Endothelial cell of umbilical vein (primary cell): ENCODE measurements at regions of chr1 and their contacts with region 1.

Region 1: DNA sequence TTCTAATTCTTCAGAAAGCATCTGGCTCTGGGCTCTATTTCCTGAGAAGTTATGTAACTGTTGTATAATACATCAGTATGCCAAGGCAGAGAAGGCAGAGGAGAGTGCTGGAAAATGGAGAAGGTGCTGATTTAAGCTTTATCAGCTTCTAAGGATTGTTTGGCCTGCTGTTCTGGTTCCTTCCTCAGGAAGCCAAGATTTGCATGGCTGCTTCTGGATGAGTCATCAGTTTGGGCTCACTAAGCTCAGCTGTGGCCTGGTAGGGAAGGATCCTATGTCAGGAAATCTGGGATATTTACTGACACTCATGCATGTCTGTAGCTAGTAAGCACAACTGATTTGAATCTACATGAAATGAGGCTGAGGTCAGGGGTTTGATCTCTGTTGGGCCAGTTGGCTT is 73.2 kb upstream of the ADGRL4 start:
- DNase-seq: peak; percentile 98
- H3K4me3 ChIP-seq: no peak overlapping the region
- H3K27ac ChIP-seq: peak overlapping the region; percentile 81
- H3K4me1 ChIP-seq: peaks cover 37% of the 10 kb centered on the region
- H3K27me3 ChIP-seq: no peaks in the 10 kb centered on the region
- CTCF ChIP-seq: no peak
- POLR2A ChIP-seq: peak; percentile 79

Region 2: GRCh38 chr1:78831731-78832360 is 247.9 kb before region 1 on chr1:
- CTCF ChIA-PET with region 1: no interaction called
- POLR2A ChIA-PET with region 1: no interaction called
- dilution Hi-C with region 1: no loop called
- intact Hi-C with region 1: loop called (anchors 2 kb)
- DNase-seq: peak; percentile 78
- H3K4me3 ChIP-seq: no peak overlapping the region
- H3K27ac ChIP-seq: peak overlapping the region; percentile 94
- H3K4me1 ChIP-seq: peaks cover 33% of the 10 kb centered on the region
- H3K27me3 ChIP-seq: no peaks in the 10 kb centered on the region
- CTCF ChIP-seq: no peak
- POLR2A ChIP-seq: no peak

Region 3: GRCh38 chr1:79006564-79006963 is 73.2 kb before region 1 on chr1 and contains the start of gene ADGRL4:
- CTCF ChIA-PET with region 1: interaction called, 3 read pairs
- POLR2A ChIA-PET with region 1: interaction called, 3 read pairs
- dilution Hi-C with region 1: no loop called
- intact Hi-C with region 1: loop called (anchors 1 kb)
- DNase-seq: peak; percentile 90
- H3K4me3 ChIP-seq: peak within 1 kb of the TSS; percentile 93 to 99 (median 97)
- H3K27ac ChIP-seq: peak within 1 kb of the TSS; percentile 97
- H3K4me1 ChIP-seq: peaks cover 47% of the 10 kb centered on the region
- H3K27me3 ChIP-seq: no peaks in the 10 kb centered on the region
- CTCF ChIP-seq: no peak
- POLR2A ChIP-seq: peak; percentile 90
- total RNA-seq, gene ADGRL4: 143 and 205 TPM in 2 replicates

Region 4: GRCh38 chr1:79042117-79042516 is 37.7 kb before region 1 on chr1:
- CTCF ChIA-PET with region 1: no interaction called
- POLR2A ChIA-PET with region 1: no interaction called
- dilution Hi-C with region 1: no loop called
- intact Hi-C with region 1: loop called (anchors 1 kb)
- DNase-seq: peak; percentile 58
- H3K4me3 ChIP-seq: no peak overlapping the region
- H3K27ac ChIP-seq: peak overlapping the region; percentile 59
- H3K4me1 ChIP-seq: peaks cover 30% of the 10 kb centered on the region
- H3K27me3 ChIP-seq: no peaks in the 10 kb centered on the region
- CTCF ChIP-seq: no peak
- POLR2A ChIP-seq: no peak

Region 5: GRCh38 chr1:79059341-79059740 is 20.4 kb before region 1 on chr1:
- CTCF ChIA-PET with region 1: no interaction called
- POLR2A ChIA-PET with region 1: no interaction called
- dilution Hi-C with region 1: no loop called
- intact Hi-C with region 1: no loop called
- DNase-seq: no peak
- H3K4me3 ChIP-seq: no peak overlapping the region
- H3K27ac ChIP-seq: no peak overlapping the region
- H3K4me1 ChIP-seq: no peaks in the 10 kb centered on the region
- H3K27me3 ChIP-seq: no peaks in the 10 kb centered on the region
- CTCF ChIP-seq: no peak
- POLR2A ChIP-seq: no peak

Region 6: DNA sequence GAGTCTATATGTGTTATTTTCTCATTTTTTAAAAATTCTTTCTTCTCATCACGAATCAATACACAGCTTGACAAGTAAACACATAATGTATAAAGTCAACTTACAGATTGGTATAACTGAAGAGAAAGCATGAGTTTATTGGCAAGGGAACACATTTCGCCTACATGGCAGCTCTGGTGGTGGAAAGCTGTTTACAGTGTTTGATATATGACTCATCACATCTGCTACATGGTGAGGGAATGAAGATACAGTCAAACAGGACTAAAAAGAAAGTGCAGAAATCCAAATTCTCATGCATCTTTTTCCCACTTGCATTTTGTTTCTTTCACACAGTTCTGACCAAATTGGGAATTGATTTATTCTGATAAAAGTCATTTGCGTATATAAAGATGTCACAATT is 49.0 kb after region 1 on chr1:
- CTCF ChIA-PET with region 1: no interaction called
- POLR2A ChIA-PET with region 1: no interaction called
- dilution Hi-C with region 1: no loop called
- intact Hi-C with region 1: loop called (anchors 5 kb)
- DNase-seq: peak; percentile 71
- H3K4me3 ChIP-seq: no peak overlapping the region
- H3K27ac ChIP-seq: no peak overlapping the region
- H3K4me1 ChIP-seq: peaks cover 12% of the 10 kb centered on the region
- H3K27me3 ChIP-seq: no peaks in the 10 kb centered on the region
- CTCF ChIP-seq: no peak
- POLR2A ChIP-seq: no peak

Region 7: GRCh38 chr1:79161077-79161476 is 81.3 kb after region 1 on chr1:
- CTCF ChIA-PET with region 1: no interaction called
- POLR2A ChIA-PET with region 1: no interaction called
- dilution Hi-C with region 1: no loop called
- intact Hi-C with region 1: loop called (anchors 1 kb)
- DNase-seq: peak; percentile 89
- H3K4me3 ChIP-seq: no peak overlapping the region
- H3K27ac ChIP-seq: peak overlapping the region; percentile 77
- H3K4me1 ChIP-seq: peaks cover 16% of the 10 kb centered on the region
- H3K27me3 ChIP-seq: no peaks in the 10 kb centered on the region
- CTCF ChIP-seq: no peak
- POLR2A ChIP-seq: no peak

Region 8: GRCh38 chr1:79188321-79188720 is 108.6 kb after region 1 on chr1:
- CTCF ChIA-PET with region 1: no interaction called
- POLR2A ChIA-PET with region 1: no interaction called
- dilution Hi-C with region 1: no loop called
- intact Hi-C with region 1: loop called (anchors 1 kb)
- DNase-seq: peak; percentile 90
- H3K4me3 ChIP-seq: peak overlapping the region in 2 of 3 experiments; percentile 15 to 26
- H3K27ac ChIP-seq: peak overlapping the region; percentile 51
- H3K4me1 ChIP-seq: peaks cover 39% of the 10 kb centered on the region
- H3K27me3 ChIP-seq: no peaks in the 10 kb centered on the region
- CTCF ChIP-seq: no peak
- POLR2A ChIP-seq: no peak